PC-9 (cell line): ENCODE measurements at regions of chr10 and their contacts with region 1.

Region 1: DNA sequence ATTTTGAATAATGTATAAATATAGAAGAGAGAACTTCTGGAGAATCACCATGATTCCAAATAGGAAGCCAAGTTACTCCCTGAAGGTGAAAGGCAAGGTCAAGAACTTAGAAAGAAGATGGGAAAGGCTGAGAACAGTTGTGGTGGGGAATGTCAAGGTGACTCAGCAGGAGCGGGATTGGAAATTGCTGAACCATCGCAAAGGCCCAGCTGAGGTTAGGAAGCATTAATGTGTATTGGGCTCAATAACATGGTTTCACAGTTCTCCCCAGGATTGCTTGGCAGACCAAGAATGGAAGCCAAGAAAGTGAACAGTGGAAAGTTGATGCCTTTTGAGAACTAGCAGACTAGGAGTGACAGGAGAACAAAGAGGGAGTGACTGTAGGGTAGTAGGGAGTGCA is 133.3 kb downstream of the VTI1A start:
- DNase-seq: no peak
- H3K4me3 ChIP-seq: no peak overlapping the region
- H3K27ac ChIP-seq: no peak overlapping the region
- H3K4me1 ChIP-seq: no peaks in the 10 kb centered on the region
- H3K27me3 ChIP-seq: no peaks in the 10 kb centered on the region
- CTCF ChIP-seq: no peak

Region 2: GRCh38 chr10:113169853-113170460 is 589.7 kb after region 1 on chr10:
- CTCF ChIA-PET with region 1: no interaction called
- POLR2A ChIA-PET with region 1: interaction called, 10 read pairs
- intact Hi-C with region 1: no loop called
- DNase-seq: no peak
- H3K4me3 ChIP-seq: no peak overlapping the region
- H3K27ac ChIP-seq: no peak overlapping the region
- H3K4me1 ChIP-seq: no peaks in the 10 kb centered on the region
- H3K27me3 ChIP-seq: no peaks in the 10 kb centered on the region
- CTCF ChIP-seq: no peak